Pancreas (tissue), 10 donors: ENCODE measurements at regions of chr14 and their contacts with region 1.

Region 1: GRCh38 chr14:61456720-61457119 is 135.3 kb downstream of the PRKCH start:
- DNase-seq: peak; percentile 61 to 84 (median 76)
- ATAC-seq: peak; percentile 78 to 88 (median 88)
- H3K4me3 ChIP-seq: no peak overlapping the region
- H3K27ac ChIP-seq: no peak overlapping the region
- H3K4me1 ChIP-seq: no peaks in the 10 kb centered on the region
- H3K27me3 ChIP-seq: no peaks in the 10 kb centered on the region
- CTCF ChIP-seq: peak; percentile 73 to 84 (median 78)

Region 2: GRCh38 chr14:61064210-61064609 is 392.5 kb before region 1 on chr14:
- intact Hi-C with region 1: no loop called
- DNase-seq: no peak
- ATAC-seq: no peak
- H3K4me3 ChIP-seq: no peak overlapping the region
- H3K27ac ChIP-seq: no peak overlapping the region
- H3K4me1 ChIP-seq: no peaks in the 10 kb centered on the region
- H3K27me3 ChIP-seq: no peaks in the 10 kb centered on the region
- CTCF ChIP-seq: no peak

Region 3: GRCh38 chr14:61296719-61297502 is 159.8 kb before region 1 on chr14:
- intact Hi-C with region 1: loop called in 1 of 3 experiments (anchors 10 kb)
- DNase-seq: no peak
- ATAC-seq: peak in 3 of 4 donors; percentile 79 to 83 (median 82)
- H3K4me3 ChIP-seq: no peak overlapping the region
- H3K27ac ChIP-seq: no peak overlapping the region
- H3K4me1 ChIP-seq: peaks cover 0 to 6% (median 0%) of the 10 kb centered on the region in 3 donors
- H3K27me3 ChIP-seq: no peaks in the 10 kb centered on the region
- CTCF ChIP-seq: peak; percentile 7 to 40 (median 36)

Region 4: GRCh38 chr14:61355892-61356325 is 100.8 kb before region 1 on chr14:
- intact Hi-C with region 1: no loop called
- DNase-seq: peak in 3 of 6 donors; percentile 13 to 37 (median 26)
- ATAC-seq: peak; percentile 24 to 90 (median 78)
- H3K4me3 ChIP-seq: no peak overlapping the region
- H3K27ac ChIP-seq: peak overlapping the region in 1 of 4 donors; percentile 24
- H3K4me1 ChIP-seq: no peaks in the 10 kb centered on the region
- H3K27me3 ChIP-seq: no peaks in the 10 kb centered on the region
- CTCF ChIP-seq: no peak

Region 5: DNA sequence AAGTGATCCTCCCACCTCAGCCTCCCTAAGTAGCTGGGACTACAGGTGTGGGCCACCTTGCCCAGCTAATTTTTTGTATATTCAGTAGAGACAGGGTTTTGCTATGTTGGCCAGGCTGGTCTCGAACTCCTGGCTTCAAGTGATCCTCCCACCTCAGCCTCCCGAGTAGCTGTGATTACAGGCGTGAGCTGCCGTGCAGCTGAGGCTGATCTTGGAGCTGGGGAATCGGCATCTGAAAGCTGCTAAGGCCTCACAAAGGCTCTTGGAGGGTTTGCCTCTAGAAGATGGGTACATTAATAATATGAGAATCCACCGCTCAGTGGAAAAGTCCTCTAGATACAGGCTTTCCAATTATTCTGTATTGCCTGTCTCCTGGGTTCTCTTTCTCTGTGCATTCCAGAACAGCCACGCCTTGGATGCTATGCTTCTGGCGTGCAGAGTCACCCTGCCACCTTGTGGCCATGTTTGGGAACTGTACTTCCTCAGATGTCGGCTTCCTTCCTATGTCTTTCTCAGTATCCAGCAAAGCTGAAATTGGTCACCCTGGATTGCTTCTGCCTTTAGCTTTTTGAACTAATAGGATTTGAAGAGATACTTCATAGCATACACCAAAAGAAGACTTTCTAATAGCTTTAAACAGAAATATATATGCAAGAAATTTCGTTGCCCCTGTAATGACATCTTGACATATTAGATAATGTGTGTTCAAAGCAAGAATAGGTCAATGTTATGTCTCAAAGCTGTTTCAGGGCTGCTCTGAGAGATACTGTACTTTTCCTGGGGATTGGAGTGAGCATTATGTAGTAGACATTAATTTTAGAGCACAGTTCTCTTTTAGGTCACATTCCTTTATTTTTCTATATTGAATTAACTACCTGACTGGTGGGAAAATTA is 380.9 kb after region 1 on chr14:
- intact Hi-C with region 1: loop called in 2 of 3 experiments (anchors 2 to 10 kb)
- DNase-seq: peak; percentile 57 to 84 (median 77)
- ATAC-seq: peak; percentile 98 to 100 (median 98)
- H3K4me3 ChIP-seq: no peak overlapping the region
- H3K27ac ChIP-seq: no peak overlapping the region
- H3K4me1 ChIP-seq: no peaks in the 10 kb centered on the region
- H3K27me3 ChIP-seq: no peaks in the 10 kb centered on the region
- CTCF ChIP-seq: peak; percentile 82 to 95 (median 86)